Calu3 (cell line): ENCODE measurements at regions of chr12 and their contacts with region 1.

Region 1: DNA sequence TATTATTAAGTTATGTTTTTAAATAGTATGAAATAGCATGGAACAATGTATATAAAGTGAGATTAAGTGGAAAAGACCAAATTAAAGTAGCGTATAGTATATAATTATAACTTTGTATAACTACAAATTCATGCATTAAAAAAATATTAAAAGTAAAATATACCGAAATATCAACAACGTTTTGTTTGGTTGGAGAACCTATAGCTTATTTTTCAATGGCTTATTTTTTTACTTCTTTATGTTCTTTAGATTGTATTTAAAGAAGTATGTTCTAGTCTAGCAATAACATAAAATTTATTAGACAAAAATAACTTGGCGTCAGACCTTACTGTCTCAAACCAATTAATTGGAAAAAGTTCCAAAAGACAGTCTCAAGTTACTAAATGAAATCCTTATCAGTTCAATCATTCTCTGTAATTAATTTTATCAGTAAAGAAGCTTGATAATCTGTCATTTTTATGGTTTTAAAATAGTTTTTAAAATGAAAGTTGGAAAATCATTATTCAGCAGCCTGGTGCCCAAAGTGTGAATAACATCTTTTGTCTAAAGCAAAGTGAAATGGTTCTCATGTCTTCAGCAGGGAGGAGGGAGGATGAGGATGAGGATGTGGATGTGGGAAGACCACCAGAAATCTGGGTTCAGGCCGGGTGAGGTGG is 46.7 kb downstream of the IRAK3 start:
- DNase-seq: no peak
- H3K4me3 Mint-ChIP-seq: peak overlapping the region; percentile 40
- H3K27ac Mint-ChIP-seq: no peak overlapping the region
- H3K4me1 Mint-ChIP-seq: peaks cover 19% of the 10 kb centered on the region
- H3K27me3 Mint-ChIP-seq: no peaks in the 10 kb centered on the region
- CTCF ChIP-seq: no peak

Region 2: DNA sequence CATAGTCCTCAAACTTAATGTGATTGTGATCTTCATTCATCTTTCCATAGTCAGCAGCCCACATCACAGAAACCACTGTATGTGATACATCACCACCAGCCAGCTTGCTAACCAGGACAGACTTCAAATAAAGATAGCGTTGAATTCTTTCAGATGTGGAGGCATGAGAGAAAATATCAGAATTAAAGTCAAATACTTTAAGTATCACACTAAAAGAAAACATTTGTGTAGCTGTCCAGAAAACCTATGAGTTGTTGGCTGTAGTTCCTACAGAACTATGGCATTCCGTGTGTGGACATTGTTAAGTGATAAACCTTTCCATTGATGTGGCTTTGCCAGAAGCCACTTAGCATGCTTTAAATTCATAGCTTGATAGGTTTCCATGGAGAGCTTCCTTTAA is 210.3 kb before region 1 on chr12:
- CTCF ChIA-PET with region 1: no interaction called
- intact Hi-C with region 1: no loop called
- DNase-seq: no peak
- H3K4me3 Mint-ChIP-seq: no peak overlapping the region
- H3K27ac Mint-ChIP-seq: no peak overlapping the region
- H3K4me1 Mint-ChIP-seq: peaks cover 11% of the 10 kb centered on the region
- H3K27me3 Mint-ChIP-seq: no peaks in the 10 kb centered on the region
- CTCF ChIP-seq: no peak

Region 3: DNA sequence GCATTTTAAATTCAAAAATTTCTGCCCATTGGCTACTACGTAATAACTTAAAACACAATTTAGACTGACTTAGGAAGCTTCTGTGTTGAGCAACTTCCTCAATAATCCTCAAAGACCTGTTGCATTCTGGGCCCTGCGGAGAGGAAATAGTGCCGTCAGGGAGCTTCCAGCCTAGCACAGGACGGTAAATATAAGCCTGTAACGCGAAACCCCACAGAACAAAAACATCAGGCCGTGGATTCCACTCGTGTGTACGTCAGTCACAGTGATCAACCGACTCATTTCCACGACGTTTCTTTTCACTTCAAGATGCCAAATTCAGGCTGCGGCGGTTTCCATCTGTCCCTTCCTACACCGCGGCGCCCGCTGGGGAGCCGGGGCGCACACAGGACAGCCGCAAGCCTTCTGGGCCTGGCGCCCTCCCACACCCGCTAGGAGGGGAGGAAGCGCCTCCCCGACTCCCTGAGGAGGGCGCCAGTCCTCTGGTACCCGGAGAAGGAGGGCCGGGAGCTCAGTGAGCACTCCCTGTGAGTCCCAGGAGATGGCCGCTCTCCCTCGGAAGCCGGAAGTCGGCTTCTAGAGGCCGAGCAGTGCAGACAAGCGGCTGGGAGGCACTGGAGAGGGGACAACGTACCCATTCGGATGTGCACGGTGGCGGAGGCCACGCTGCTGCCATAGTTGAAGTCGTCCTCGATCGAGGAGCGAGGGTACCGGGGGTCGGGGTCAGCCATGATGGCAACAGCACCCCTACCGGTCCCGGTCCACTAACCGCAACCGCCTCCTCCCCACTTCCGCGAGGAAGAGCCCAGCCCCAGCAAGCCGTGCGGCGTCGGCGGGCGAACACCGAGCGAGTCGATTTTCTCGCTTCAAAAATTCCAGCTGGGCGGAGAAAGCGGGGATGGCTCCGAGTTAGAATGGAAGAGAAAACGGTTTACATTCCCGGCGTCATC is 66.3 kb before region 1 on chr12 and contains the start of gene TMBIM4:
- CTCF ChIA-PET with region 1: interaction called, 18 read pairs
- intact Hi-C with region 1: loop called (anchors 1 kb)
- DNase-seq: peak; percentile 91
- H3K4me3 Mint-ChIP-seq: peak within 1 kb of the TSS; percentile 100
- H3K27ac Mint-ChIP-seq: peak within 1 kb of the TSS; percentile 99
- H3K4me1 Mint-ChIP-seq: peaks cover 25% of the 10 kb centered on the region
- H3K27me3 Mint-ChIP-seq: no peaks in the 10 kb centered on the region
- CTCF ChIP-seq: peak; percentile 63
- total RNA-seq, gene TMBIM4: 77.1 and 89.2 TPM in 2 replicates

Region 4: GRCh38 chr12:66195242-66195641 is 40.5 kb before region 1 on chr12:
- CTCF ChIA-PET with region 1: interaction called, 3 read pairs
- intact Hi-C with region 1: loop called (anchors 1 kb)
- DNase-seq: peak; percentile 24
- H3K4me3 Mint-ChIP-seq: peak overlapping the region; percentile 16
- H3K27ac Mint-ChIP-seq: peak overlapping the region; percentile 37
- H3K4me1 Mint-ChIP-seq: peaks cover 51% of the 10 kb centered on the region
- H3K27me3 Mint-ChIP-seq: no peaks in the 10 kb centered on the region
- CTCF ChIP-seq: no peak

Region 5: DNA sequence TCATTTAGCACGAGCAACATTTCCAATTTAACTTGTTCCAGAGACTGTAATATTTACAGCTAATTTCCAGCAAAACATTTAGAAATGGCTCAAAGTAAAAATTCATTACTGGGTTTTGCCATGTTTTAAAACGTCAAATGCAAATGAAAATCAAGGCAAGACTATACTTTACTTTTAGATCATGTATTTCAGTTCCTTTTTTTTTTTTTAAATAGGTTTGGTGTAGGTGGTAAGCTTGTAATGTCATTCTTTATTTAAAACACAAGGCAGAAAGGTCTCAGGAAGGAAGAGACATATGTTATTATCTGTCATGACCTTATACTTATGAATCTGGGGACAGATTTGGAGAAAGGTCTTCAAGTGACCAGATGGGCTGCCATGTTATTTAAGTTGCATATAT is 389.1 kb after region 1 on chr12:
- CTCF ChIA-PET with region 1: no interaction called
- intact Hi-C with region 1: no loop called
- DNase-seq: no peak
- H3K4me3 Mint-ChIP-seq: no peak overlapping the region
- H3K27ac Mint-ChIP-seq: no peak overlapping the region
- H3K4me1 Mint-ChIP-seq: peaks cover 42% of the 10 kb centered on the region
- H3K27me3 Mint-ChIP-seq: no peaks in the 10 kb centered on the region
- CTCF ChIP-seq: no peak